ENCODE measurements at regions of chr2 and their contacts with region 1.

Region 1: DNA sequence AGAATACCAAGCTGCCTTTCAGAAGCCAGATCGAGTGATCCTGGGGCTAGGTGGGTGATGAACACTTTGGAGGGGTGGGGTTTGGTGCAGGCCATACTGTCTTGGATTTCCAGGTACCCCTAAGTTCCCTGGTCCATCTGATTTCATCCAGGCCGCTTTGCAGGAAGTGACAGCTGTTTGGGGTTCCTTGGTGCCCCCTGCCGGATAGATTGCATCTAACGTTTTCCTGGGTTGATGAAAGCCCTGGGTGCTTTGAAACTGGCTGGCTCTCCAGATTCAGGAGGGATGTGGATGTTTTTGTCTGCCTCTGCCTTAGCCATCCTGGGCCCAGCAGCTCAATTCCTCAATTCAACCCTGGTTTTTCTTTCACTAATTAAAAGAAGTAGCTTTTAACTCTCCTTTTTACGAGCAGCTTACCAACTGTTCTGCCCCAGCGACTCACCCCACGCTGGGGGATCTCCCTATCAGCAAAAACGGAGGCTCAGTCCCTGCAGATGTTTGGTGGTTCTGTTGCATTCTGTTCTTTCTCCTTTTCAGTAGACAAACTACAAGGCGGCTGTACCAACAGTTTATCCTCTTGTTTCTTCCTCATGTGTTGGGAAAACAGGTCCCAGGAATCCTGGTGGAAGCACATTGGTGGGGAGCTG is 37.1 kb downstream of the ARHGEF4 start:
- DNase-seq: peak; percentile 81
- ATAC-seq: peak; percentile 83
- H3K4me3 Mint-ChIP-seq: no peak overlapping the region
- H3K27ac Mint-ChIP-seq: no peak overlapping the region
- H3K4me1 Mint-ChIP-seq: no peaks in the 10 kb centered on the region
- H3K27me3 Mint-ChIP-seq: peaks cover 14% of the 10 kb centered on the region

Region 2: GRCh38 chr2:130778781-130779180 is 95.0 kb before region 1 on chr2:
- CTCF ChIA-PET with region 1: no interaction called
- POLR2A ChIA-PET with region 1: no interaction called
- DNase-seq: no peak
- ATAC-seq: no peak
- H3K4me3 Mint-ChIP-seq: no peak overlapping the region
- H3K27ac Mint-ChIP-seq: no peak overlapping the region
- H3K4me1 Mint-ChIP-seq: no peaks in the 10 kb centered on the region
- H3K27me3 Mint-ChIP-seq: peaks cover 4% of the 10 kb centered on the region

Region 3: GRCh38 chr2:130884503-130884902 is 10.7 kb after region 1 on chr2:
- CTCF ChIA-PET with region 1: interaction called, 11 read pairs
- POLR2A ChIA-PET with region 1: no interaction called
- DNase-seq: no peak
- ATAC-seq: no peak
- H3K4me3 Mint-ChIP-seq: no peak overlapping the region
- H3K27ac Mint-ChIP-seq: no peak overlapping the region
- H3K4me1 Mint-ChIP-seq: no peaks in the 10 kb centered on the region
- H3K27me3 Mint-ChIP-seq: peaks cover 9% of the 10 kb centered on the region

Region 4: GRCh38 chr2:130920415-130921163 is 46.8 kb after region 1 on chr2:
- CTCF ChIA-PET with region 1: no interaction called
- POLR2A ChIA-PET with region 1: no interaction called
- DNase-seq: peak; percentile 58
- ATAC-seq: no peak
- H3K4me3 Mint-ChIP-seq: no peak overlapping the region
- H3K27ac Mint-ChIP-seq: no peak overlapping the region
- H3K4me1 Mint-ChIP-seq: no peaks in the 10 kb centered on the region
- H3K27me3 Mint-ChIP-seq: peaks cover 2% of the 10 kb centered on the region

Measured in activated CD8-positive, alpha-beta T cell treated with anti-CD3 and anti-CD28 coated beads, Interleukin-2, amount 10 ng/mL, durations not matched to agents 7 days and 5 days (primary cell).